Activated T-helper 1 cell treated with anti-CD3 and anti-CD28 coated beads, Interleukin-12 subunit alpha, Interleukin-12 subunit beta, Interleukin-2, Interleukin-4 antibody, amounts not matched to agents 30 ng/mL and 10 ng/mL and 1 ng/mL, durations not matched to agents 14 hours and 24 hours and 36 hours (primary cell): ENCODE measurements at regions of chr16 and their contacts with region 1.

Region 1: GRCh38 chr16:57185944-57186871 is at the starts of genes PSME3IP1 and RSPRY1:
- DNase-seq: peak; percentile 99
- H3K4me3 Mint-ChIP-seq: peak within 1 kb of the TSS; percentile 96
- H3K27ac Mint-ChIP-seq: peak within 1 kb of the TSS; percentile 98
- H3K4me1 Mint-ChIP-seq: peaks cover 44% of the 10 kb centered on the region
- H3K27me3 Mint-ChIP-seq: no peaks in the 10 kb centered on the region
- total RNA-seq, gene PSME3IP1: 116 and 124 TPM in 2 replicates
- total RNA-seq, gene RSPRY1: 36.0 and 36.5 TPM in 2 replicates

Region 2: GRCh38 chr16:56931892-56932720 is 254.1 kb before region 1 on chr16 and contains the start of gene HERPUD1:
- intact Hi-C with region 1: loop called (anchors 1 kb)
- DNase-seq: peak; percentile 99
- H3K4me3 Mint-ChIP-seq: peak within 1 kb of the TSS; percentile 95
- H3K27ac Mint-ChIP-seq: peak within 1 kb of the TSS; percentile 94
- H3K4me1 Mint-ChIP-seq: peaks cover 41% of the 10 kb centered on the region
- H3K27me3 Mint-ChIP-seq: no peaks in the 10 kb centered on the region
- total RNA-seq, gene HERPUD1: 176 and 178 TPM in 2 replicates

Region 3: DNA sequence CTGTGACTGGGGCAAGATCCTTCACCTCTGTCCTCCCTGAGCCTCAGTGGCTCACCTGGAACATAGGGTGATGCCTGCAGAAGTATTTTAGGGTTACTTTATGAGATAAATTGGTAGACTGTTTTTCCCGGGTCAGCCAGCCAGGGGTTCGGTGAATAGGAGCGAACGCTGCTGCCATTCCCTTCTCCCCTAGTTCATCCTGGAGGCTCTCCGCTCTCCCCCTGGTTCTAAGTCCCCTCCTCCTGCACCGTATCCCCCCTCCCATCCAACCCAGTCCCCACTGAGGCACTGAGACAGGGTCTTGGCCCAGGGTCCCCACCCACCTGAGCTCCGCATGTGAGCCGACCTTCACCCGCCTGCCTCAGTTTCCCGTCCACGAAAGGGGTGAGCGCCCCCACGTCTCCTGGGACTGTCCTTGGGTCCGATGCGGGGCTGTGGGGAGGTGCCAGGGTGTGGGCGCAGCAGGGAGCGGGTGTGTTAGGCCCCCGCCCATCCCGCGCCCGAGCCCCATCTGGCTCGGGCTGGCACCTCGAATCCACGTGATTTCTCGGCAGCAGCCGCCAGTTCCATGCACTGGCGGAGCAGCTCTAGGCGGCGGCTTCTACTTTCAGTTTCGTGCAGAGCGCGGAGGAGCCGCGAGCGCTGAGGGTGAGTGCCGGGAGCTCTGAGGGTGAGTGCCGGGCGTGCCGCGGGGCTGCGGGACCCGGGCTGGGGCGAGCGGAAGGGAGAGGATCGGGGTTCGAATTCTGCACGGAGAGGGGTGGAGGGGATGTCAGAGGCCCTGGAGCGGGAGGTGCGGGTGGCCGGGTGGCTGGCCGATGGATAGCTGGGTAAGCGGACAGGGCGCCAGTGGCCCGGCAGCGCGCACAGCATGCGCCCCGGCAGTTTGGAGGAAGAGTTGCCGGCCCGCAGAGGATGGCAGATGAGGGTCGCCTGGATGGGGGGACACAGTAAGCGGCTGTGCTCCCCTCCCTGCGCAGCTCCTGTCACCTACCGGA is 197.0 kb before region 1 on chr16 and contains the start of gene NLRC5:
- intact Hi-C with region 1: loop called (anchors 1 kb)
- DNase-seq: peak; percentile 89
- H3K4me3 Mint-ChIP-seq: peak within 1 kb of the TSS; percentile 97
- H3K27ac Mint-ChIP-seq: peak within 1 kb of the TSS; percentile 97
- H3K4me1 Mint-ChIP-seq: peaks cover 83% of the 10 kb centered on the region
- H3K27me3 Mint-ChIP-seq: no peaks in the 10 kb centered on the region
- total RNA-seq, gene NLRC5: 164 and 175 TPM in 2 replicates

Region 4: GRCh38 chr16:57091975-57092785 is 94.0 kb before region 1 on chr16 and contains the start of gene CPNE2:
- intact Hi-C with region 1: loop called (anchors 5 kb)
- DNase-seq: peak; percentile 34
- H3K4me3 Mint-ChIP-seq: peak within 1 kb of the TSS; percentile 84
- H3K27ac Mint-ChIP-seq: peak within 1 kb of the TSS; percentile 75
- H3K4me1 Mint-ChIP-seq: peaks cover 7% of the 10 kb centered on the region
- H3K27me3 Mint-ChIP-seq: peaks cover 22% of the 10 kb centered on the region
- total RNA-seq, gene CPNE2: 3.7 and 4.6 TPM in 2 replicates

Region 5: GRCh38 chr16:57422026-57422944 is 236.1 kb after region 1 on chr16:
- intact Hi-C with region 1: loop called (anchors 1 kb)
- DNase-seq: no peak
- H3K4me3 Mint-ChIP-seq: no peak overlapping the region
- H3K27ac Mint-ChIP-seq: no peak overlapping the region
- H3K4me1 Mint-ChIP-seq: peaks cover 14% of the 10 kb centered on the region
- H3K27me3 Mint-ChIP-seq: no peaks in the 10 kb centered on the region

Region 6: DNA sequence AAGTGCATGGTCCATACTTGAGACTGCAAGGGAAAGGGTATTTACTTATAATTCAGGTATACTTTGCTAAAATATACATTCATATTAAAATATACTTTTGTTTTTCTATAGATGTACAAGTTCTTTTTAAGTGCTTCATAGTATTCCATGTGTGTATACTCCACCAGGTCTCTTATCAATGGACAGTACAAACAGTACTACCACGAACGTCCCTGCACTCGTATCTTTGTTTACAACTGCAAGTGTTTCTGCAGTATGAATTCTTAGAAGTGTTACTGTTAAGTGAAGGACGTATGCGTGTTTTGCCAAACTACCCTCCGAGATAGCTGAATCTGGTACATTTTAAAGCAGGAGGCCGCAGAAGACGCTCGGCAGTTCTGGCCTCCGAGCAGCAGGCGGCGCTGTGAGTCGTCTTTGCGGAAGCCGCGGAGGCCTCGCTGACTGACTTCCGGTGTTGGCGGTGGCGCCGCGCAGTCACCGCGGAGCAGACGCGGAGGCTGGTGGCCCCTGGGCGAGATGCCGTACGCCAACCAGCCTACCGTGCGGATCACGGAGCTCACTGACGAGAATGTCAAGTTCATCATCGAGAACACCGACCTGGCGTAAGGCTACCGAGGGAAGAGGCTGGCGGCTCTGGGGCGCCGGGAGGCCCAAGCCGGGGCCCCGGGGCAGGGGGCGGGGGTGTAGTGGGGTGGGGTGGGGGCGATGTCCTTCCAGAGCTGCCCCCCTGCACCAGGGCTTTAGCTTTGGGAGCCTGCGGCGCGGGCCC is 276.2 kb after region 1 on chr16 and contains the start of gene POLR2C:
- intact Hi-C with region 1: loop called (anchors 5 kb)
- DNase-seq: peak; percentile 89
- H3K4me3 Mint-ChIP-seq: peak within 1 kb of the TSS; percentile 100
- H3K27ac Mint-ChIP-seq: peak within 1 kb of the TSS; percentile 99
- H3K4me1 Mint-ChIP-seq: peaks cover 43% of the 10 kb centered on the region
- H3K27me3 Mint-ChIP-seq: no peaks in the 10 kb centered on the region
- total RNA-seq, gene POLR2C: 89.2 and 90.9 TPM in 2 replicates

Region 7: DNA sequence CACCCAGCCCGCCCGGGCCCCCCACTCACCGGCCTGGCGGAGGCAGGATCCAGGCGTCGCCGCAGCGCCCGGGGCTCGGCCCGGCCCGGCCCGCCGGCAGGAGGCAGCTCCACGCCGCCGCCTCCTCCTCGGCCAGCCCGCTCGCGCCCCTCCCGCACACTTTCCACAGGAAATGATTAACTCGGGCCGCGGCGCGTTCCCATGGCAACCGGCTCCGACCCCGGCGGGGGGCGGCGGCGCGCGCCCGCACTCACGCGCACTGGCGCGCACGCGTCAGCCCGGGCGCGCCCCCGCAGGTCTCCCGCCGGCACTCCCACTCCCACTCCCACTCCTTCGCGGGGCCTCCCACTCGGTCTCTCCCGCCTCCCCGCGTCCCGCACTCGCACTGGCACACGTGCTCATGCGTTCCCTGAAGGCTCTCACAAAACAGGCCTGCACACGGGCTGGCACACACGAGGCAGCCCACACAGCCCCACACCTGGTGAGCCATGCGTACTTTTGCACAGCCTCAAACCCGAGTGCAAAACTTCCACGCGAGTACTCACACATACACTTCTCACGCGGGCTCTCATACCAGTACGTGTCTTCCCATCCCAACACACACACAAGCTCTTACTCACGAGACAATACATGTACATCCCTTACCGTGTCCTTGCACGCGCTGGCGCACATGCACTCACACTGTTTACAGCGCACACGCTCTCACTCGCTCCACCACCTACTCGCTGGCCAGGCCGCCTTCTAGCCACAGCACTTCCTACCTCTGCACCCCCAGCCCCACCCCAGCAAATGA is 616.3 kb after region 1 on chr16 and contains the start of gene KIFC3:
- intact Hi-C with region 1: no loop called
- DNase-seq: peak; percentile 61
- H3K4me3 Mint-ChIP-seq: peak within 1 kb of the TSS; percentile 83
- H3K27ac Mint-ChIP-seq: peak within 1 kb of the TSS; percentile 89
- H3K4me1 Mint-ChIP-seq: peaks cover 26% of the 10 kb centered on the region
- H3K27me3 Mint-ChIP-seq: peaks cover 59% of the 10 kb centered on the region
- total RNA-seq, gene KIFC3: 0.93 and 0.96 TPM in 2 replicates